HepG2 (cell line): ENCODE measurements at regions of chr22 and their contacts with region 1.

Region 1: GRCh38 chr22:48574776-48575565 is 1252.7 kb downstream of the BRD1 start:
- DNase-seq: peak; percentile 58
- ATAC-seq: peak; percentile 88
- H3K4me3 ChIP-seq: peak overlapping the region in 1 of 3 experiments; percentile 33; a peak in 2 of 6 replicates
- H3K27ac ChIP-seq: no peak overlapping the region
- H3K4me1 ChIP-seq: peaks cover 29% of the 10 kb centered on the region
- H3K27me3 ChIP-seq: peaks cover 2 to 15% of the 10 kb centered on the region in 2 experiments; a peak in 4 of 5 replicates
- CTCF ChIP-seq: peak; percentile 82
- EP300 ChIP-seq: no peak
- POLR2A ChIP-seq: no peak
- RAD21 ChIP-seq: peak; percentile 99

Region 2: DNA sequence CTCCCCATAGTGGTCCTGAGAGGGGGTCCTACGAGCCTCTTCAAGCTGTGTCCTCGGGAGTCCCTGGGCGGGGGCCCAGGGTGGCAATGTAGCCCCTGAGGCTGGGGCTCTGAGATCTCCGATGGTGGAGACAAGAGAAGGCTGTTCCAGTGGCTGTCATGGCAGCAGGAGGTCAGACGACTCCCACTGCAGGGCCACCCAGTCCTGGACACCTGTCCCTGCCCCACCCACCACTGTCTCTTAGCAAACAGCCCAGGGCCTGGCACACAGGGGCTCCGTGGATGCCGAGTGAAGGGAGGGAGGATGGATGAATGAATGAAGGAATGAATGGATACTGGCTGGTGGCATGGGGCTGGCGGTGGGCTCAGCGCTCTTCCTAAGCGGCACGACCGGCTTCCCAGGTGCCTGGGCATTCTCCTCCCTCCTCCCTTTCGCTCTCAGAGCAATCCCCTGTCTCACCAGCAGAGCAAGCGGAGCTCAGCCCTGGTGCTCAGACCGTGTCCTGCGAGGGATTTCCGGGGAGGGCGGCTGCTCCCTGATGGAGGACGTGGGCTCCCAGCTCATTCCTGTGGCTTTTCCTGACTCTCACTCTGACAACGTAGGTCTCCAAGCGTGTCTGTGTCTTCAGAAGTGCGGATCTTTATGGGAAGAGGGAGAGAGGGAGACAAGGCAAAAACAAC is 19.9 kb before region 1 on chr22:
- CTCF ChIA-PET with region 1: no interaction called
- POLR2A ChIA-PET with region 1: no interaction called
- in situ Hi-C with region 1: no loop called
- intact Hi-C with region 1: no loop called
- DNase-seq: no peak
- ATAC-seq: peak; percentile 77
- H3K4me3 ChIP-seq: no peak overlapping the region
- H3K27ac ChIP-seq: no peak overlapping the region
- H3K4me1 ChIP-seq: no peaks in the 10 kb centered on the region
- H3K27me3 ChIP-seq: peaks cover 24 to 76% of the 10 kb centered on the region in 2 experiments
- CTCF ChIP-seq: no peak
- EP300 ChIP-seq: no peak
- POLR2A ChIP-seq: no peak
- RAD21 ChIP-seq: no peak

Region 3: GRCh38 chr22:48663297-48663696 is 88.3 kb after region 1 on chr22:
- CTCF ChIA-PET with region 1: interaction called, 15 read pairs
- POLR2A ChIA-PET with region 1: no interaction called
- in situ Hi-C with region 1: no loop called
- intact Hi-C with region 1: loop called (anchors 5 kb)
- DNase-seq: peak; percentile 44
- ATAC-seq: peak; percentile 26; the same call in 2 of the 3 replicates
- H3K4me3 ChIP-seq: no peak overlapping the region
- H3K27ac ChIP-seq: no peak overlapping the region
- H3K4me1 ChIP-seq: no peaks in the 10 kb centered on the region
- H3K27me3 ChIP-seq: peaks cover 0 to 3% of the 10 kb centered on the region in 2 experiments; a peak in 3 of 5 replicates
- CTCF ChIP-seq: peak; percentile 74
- EP300 ChIP-seq: no peak
- POLR2A ChIP-seq: no peak
- RAD21 ChIP-seq: 0 out of 2 replicates have a peak, but pooled peaks have one; percentile 37

Region 4: GRCh38 chr22:48702573-48703264 is 127.7 kb after region 1 on chr22:
- CTCF ChIA-PET with region 1: no interaction called
- POLR2A ChIA-PET with region 1: interaction called, 3 read pairs
- in situ Hi-C with region 1: no loop called
- intact Hi-C with region 1: loop called (anchors 5 kb)
- DNase-seq: peak; percentile 98
- ATAC-seq: peak; percentile 91
- H3K4me3 ChIP-seq: peak overlapping the region; percentile 8 to 66 (median 45); a peak in 4 of 6 replicates
- H3K27ac ChIP-seq: peak overlapping the region; percentile 94
- H3K4me1 ChIP-seq: peaks cover 92% of the 10 kb centered on the region
- H3K27me3 ChIP-seq: no peaks in the 10 kb centered on the region
- CTCF ChIP-seq: peak; percentile 51
- EP300 ChIP-seq: peak; percentile 92 to 97
- POLR2A ChIP-seq: peak; percentile 73 to 85
- RAD21 ChIP-seq: peak; percentile 53

Region 5: DNA sequence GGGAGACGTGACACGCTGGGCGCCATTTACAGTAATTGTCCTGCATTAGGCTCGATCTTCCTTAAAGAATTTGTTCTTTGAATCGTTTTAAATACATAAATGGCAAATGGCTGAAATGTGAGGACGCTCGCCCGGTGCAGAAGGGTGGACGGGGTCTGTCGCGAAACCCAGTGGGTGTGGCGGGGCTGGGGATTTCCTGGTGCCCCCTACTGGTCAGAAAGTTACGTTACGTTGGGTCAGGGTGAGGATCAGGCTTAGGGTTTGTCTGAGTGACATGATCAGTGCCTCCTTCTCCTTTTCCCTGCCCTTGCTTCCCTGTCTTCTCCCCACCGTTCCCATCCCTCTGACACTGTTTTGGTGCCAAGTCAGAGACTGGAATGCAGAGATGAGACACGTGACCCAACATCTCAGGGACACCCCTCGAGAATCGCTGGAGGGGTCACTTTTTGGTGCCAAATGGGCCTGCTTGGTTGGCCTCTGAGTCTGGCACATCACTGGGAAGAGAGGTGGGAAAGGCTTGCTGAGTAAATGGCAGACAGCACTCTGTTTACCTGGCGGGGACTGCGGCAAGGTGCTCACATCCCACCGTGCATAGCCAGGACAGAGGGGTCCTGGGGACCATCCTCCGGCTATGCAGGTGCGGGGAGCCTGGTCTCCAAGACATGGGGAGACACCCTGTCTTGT is 145.1 kb after region 1 on chr22:
- CTCF ChIA-PET with region 1: interaction called, 12 read pairs
- POLR2A ChIA-PET with region 1: no interaction called
- in situ Hi-C with region 1: no loop called
- intact Hi-C with region 1: no loop called
- DNase-seq: no peak
- ATAC-seq: peak; percentile 64
- H3K4me3 ChIP-seq: no peak overlapping the region
- H3K27ac ChIP-seq: no peak overlapping the region
- H3K4me1 ChIP-seq: no peaks in the 10 kb centered on the region
- H3K27me3 ChIP-seq: no peaks in the 10 kb centered on the region
- CTCF ChIP-seq: peak; percentile 60
- EP300 ChIP-seq: no peak
- POLR2A ChIP-seq: no peak
- RAD21 ChIP-seq: no peak

Region 6: GRCh38 chr22:49305214-49305909 is 730.4 kb after region 1 on chr22:
- CTCF ChIA-PET with region 1: interaction called, 3 read pairs
- POLR2A ChIA-PET with region 1: no interaction called
- in situ Hi-C with region 1: loop called (anchors 25 kb)
- intact Hi-C with region 1: loop called (anchors 5 kb)
- DNase-seq: peak; percentile 27
- ATAC-seq: peak; percentile 94
- H3K4me3 ChIP-seq: peak overlapping the region in 1 of 3 experiments; percentile 28; a peak in 1 of 6 replicates
- H3K27ac ChIP-seq: no peak overlapping the region
- H3K4me1 ChIP-seq: no peaks in the 10 kb centered on the region
- H3K27me3 ChIP-seq: peaks cover 7 to 70% of the 10 kb centered on the region in 2 experiments; a peak in 4 of 5 replicates
- CTCF ChIP-seq: peak; percentile 96
- EP300 ChIP-seq: no peak
- POLR2A ChIP-seq: no peak
- RAD21 ChIP-seq: peak; percentile 94